Psoas muscle (tissue), 8 donors: ENCODE measurements at regions of chr4 and their contacts with region 1.

Region 1: DNA sequence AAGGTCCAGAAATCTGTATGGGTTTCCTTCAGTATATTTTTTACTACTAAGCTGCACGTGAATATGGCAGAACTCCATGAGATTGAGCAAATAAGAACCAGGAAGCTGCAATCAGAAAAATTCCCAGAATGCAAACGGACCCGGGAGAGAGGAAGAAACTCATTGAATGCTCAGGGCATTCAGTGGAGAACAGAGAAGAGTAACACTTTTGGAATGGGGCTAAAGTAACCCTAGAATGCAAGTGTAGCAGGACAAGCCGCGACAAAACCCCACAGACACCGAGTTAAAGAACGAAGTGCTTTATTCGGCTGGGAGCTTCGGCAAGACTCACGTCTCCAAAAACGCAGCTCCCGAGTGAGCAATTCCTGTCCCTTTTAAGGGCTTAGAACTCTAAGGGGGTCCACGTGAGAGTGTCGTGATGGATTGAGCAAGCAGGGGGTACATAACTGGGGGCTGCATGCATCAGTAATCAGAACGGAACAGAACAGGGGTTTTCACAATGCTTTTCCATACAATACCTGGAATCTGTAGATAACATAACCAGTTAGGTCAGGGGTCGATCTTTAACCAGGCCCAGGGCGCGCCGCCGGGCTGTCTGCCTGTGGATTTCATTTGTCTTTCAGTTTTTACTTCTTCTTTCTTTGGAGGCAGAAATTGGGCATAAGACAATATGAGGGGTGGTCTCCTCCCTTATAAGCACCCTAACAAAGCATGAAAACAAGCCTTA is 56.4 kb downstream of the RAB28 start:
- DNase-seq: no peak
- ATAC-seq: no peak
- H3K4me3 ChIP-seq: no peak overlapping the region
- H3K27ac ChIP-seq: no peak overlapping the region
- H3K4me1 ChIP-seq: no peaks in the 10 kb centered on the region
- H3K27me3 ChIP-seq: no peaks in the 10 kb centered on the region
- CTCF ChIP-seq: no peak

Region 2: DNA sequence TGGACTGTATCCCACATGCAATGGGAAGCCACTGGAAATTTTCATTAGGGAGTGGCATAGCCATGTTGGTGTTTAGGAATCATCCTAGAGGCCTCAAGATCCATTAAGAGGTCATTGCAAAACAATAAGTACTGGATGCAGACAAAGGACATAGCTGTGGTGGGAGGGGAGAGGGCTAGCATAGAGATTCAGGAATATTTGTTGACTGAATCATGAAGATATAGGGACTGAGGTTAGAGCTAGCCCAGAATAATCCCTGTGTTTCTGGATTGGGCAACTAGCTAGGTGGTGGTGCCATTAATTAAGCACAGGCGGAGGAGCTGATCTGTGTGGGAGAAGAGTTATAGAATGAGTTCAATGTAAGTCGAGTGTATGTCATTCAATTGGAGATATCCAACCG is 78.7 kb before region 1 on chr4:
- intact Hi-C with region 1: no loop called
- DNase-seq: no peak
- ATAC-seq: no peak
- H3K4me3 ChIP-seq: no peak overlapping the region
- H3K27ac ChIP-seq: no peak overlapping the region
- H3K4me1 ChIP-seq: no peaks in the 10 kb centered on the region
- H3K27me3 ChIP-seq: no peaks in the 10 kb centered on the region
- CTCF ChIP-seq: no peak

Region 3: GRCh38 chr4:13441506-13441905 is 13.7 kb after region 1 on chr4:
- intact Hi-C with region 1: loop called in 1 of 2 experiments (anchors 2 kb)
- DNase-seq: no peak
- ATAC-seq: no peak
- H3K4me3 ChIP-seq: no peak overlapping the region
- H3K27ac ChIP-seq: no peak overlapping the region
- H3K4me1 ChIP-seq: no peaks in the 10 kb centered on the region
- H3K27me3 ChIP-seq: no peaks in the 10 kb centered on the region
- CTCF ChIP-seq: no peak